Heart right ventricle (tissue), 16 donors: ENCODE measurements at regions of chr19 and their contacts with region 1.

Region 1: DNA sequence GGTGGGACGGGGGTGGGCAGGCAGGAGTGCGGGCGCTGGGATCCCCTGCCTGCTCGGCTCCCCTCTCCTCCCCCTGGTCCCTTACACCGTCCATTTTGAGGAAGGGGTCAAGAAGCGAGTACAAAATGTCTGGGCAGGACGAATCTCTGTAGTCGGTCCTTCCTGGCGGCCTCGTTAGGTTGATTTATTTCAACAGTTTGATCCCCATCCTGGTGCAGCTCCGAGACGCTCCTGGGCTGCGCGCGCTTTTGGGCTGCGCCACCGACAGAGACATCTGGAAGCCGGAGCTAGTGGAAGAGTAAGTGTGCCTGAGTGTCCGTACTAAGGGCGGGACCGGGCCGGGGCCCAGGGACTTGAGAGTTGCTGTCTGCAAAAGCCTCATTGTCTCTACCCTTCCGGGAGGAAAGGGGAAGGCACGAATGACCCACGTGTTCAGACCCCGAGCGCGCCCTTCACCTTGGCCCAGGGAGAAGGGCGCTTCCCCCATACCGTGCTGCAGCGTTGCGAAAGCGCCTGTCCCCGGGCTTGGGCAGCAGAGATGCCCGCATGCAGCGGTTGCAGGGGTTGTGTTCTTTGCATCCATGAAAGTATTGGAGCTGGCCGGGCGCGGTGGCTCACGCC is 1.8 kb downstream of the ZNF114 start:
- DNase-seq: peak; percentile 40 to 45
- ATAC-seq: peak; percentile 59 to 80 (median 75)
- H3K4me3 ChIP-seq: peak overlapping the region; percentile 34 to 71 (median 58)
- H3K27ac ChIP-seq: peak overlapping the region in 9 of 10 donors; percentile 24 to 85 (median 73)
- H3K4me1 ChIP-seq: peaks cover 0 to 21% (median 8%) of the 10 kb centered on the region in 9 donors
- H3K27me3 ChIP-seq: peaks cover 0 to 3% (median 0%) of the 10 kb centered on the region in 7 donors
- CTCF ChIP-seq: no peak

Region 2: DNA sequence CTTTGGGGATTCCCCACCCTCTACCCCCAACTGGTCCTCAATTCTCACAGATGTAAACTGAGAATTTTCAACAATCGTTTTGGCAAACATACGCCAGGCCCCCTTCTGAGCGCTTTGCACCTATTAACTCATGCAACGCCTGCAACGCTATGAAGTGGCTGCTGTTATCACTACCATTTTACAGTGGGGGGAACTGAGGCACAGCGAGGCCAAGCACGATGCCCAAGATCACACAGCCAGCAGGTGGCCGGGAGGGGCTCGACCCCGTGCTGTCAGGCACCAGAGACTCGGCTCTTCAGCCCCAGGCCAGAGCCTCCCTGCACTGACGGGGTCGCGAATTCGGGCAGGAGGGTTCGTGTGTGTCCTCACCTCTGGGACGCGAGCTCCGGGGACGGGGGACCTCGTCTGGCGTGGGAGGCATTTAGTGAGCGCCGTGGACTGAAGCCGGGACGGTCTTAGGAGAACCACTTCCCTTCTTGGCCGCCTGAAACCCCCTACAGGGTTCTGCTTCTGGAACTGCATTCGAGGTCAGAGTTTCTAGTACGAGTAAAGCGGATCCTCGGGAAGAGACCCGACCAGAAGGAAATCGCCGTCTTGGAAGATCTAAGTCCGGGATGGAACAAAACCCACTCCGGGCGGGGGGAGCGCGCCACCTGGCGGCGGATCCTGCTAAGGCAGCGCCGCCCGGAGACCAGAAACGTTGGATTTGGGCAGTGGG is 19.3 kb after region 1 on chr19:
- intact Hi-C with region 1: loop called in 7 of 10 experiments (anchors 1 to 2 kb)
- DNase-seq: peak; percentile 77 to 83
- ATAC-seq: peak; percentile 75 to 95 (median 92)
- H3K4me3 ChIP-seq: peak overlapping the region in 9 of 10 donors; percentile 30 to 58 (median 54)
- H3K27ac ChIP-seq: peak overlapping the region in 4 of 10 donors; percentile 16 to 51 (median 30)
- H3K4me1 ChIP-seq: peaks cover 0 to 17% (median 13%) of the 10 kb centered on the region in 9 donors
- H3K27me3 ChIP-seq: peaks cover 0 to 7% (median 3%) of the 10 kb centered on the region in 7 donors
- CTCF ChIP-seq: peak in 8 of 9 donors; percentile 96 to 99 (median 98)

Region 3: GRCh38 chr19:48333467-48334384 is 62.1 kb after region 1 on chr19:
- intact Hi-C with region 1: loop called in 2 of 10 experiments (anchors 2 to 10 kb)
- DNase-seq: peak; percentile 86 to 92
- ATAC-seq: peak; percentile 83 to 89 (median 87)
- H3K4me3 ChIP-seq: peak overlapping the region in 9 of 10 donors; percentile 31 to 67 (median 54)
- H3K27ac ChIP-seq: peak overlapping the region; percentile 64 to 94 (median 85)
- H3K4me1 ChIP-seq: peaks cover 10 to 56% (median 31%) of the 10 kb centered on the region in 9 donors
- H3K27me3 ChIP-seq: no peaks in the 10 kb centered on the region
- CTCF ChIP-seq: peak; percentile 74 to 97 (median 87)